ENCODE measurements at regions of chr15 and their contacts with region 1.

Region 1: DNA sequence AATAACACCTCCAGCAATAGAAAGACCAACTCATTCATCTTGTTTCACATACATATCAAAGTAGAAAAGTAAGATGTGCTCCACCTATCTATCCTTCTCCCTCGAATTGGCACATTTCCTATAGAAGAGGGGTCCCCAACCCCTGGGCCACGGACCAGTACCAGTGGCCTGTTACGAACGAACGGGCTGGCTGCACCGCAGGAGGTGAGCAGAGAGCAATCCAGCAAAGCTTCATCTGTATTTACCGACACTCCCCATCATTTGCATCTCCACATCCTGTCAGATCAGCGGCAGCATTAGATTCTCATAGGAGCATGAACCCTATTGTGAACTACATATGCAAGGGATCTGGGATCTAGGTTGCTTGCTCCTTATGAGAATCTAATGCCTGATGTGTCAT is 95.0 kb upstream of the CGNL1 start:
- DNase-seq: no peak
- ATAC-seq: no peak
- H3K4me3 ChIP-seq: no peak overlapping the region
- H3K27ac ChIP-seq: no peak overlapping the region
- H3K4me1 ChIP-seq: peaks cover 0 to 23% (median 0%) of the 10 kb centered on the region in 12 donors
- H3K27me3 ChIP-seq: no peaks in the 10 kb centered on the region
- CTCF ChIP-seq: no peak
- POLR2A ChIP-seq: no peak

Region 2: DNA sequence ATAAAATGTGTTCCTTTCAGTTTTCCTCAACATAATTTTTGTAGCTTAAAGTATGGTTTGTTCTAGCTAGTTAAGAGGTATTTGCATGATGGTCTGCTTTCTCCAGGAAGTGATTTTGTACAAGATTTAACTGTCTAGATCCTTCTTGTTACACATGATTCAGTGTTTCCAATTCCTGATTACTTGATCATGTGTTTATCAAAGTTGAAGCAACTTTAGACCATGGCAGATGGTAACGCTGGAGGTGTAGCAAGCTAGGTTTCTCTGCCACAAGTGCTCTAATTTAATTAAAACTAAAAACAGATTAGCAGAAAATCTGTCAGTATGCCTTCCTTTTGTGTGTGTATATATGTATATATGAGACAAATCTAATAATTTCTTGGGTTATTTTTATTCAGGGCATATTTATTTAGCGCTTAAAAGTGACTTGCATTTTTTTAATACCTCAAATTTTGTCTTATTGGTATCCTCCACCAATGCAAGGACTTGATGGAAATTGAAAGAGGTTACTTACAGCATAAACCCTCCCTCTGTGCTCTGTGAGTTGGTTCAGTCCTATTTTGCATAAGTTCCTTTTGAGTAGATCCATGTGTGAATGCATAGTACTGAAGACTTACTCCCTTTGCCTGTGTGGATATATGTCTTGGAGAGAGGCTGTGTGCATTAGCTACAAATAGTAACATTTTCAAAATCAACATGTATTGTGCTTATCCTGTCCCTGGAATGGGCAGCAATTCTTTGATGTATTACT is 62.3 kb before region 1 on chr15:
- intact Hi-C with region 1: loop called in 1 of 10 experiments (anchors 10 kb)
- DNase-seq: no peak
- ATAC-seq: peak in 1 of 4 donors; percentile 35
- H3K4me3 ChIP-seq: peak overlapping the region in 8 of 12 donors; percentile 10 to 45 (median 33)
- H3K27ac ChIP-seq: peak overlapping the region in 5 of 12 donors; percentile 9 to 26 (median 12)
- H3K4me1 ChIP-seq: peaks cover 0 to 66% (median 31%) of the 10 kb centered on the region in 12 donors
- H3K27me3 ChIP-seq: no peaks in the 10 kb centered on the region
- CTCF ChIP-seq: no peak
- POLR2A ChIP-seq: no peak

Region 3: GRCh38 chr15:57505949-57506391 is 224.6 kb after region 1 on chr15:
- intact Hi-C with region 1: no loop called
- DNase-seq: peak; percentile 62 to 74 (median 66)
- ATAC-seq: peak; percentile 56 to 84 (median 78)
- H3K4me3 ChIP-seq: no peak overlapping the region
- H3K27ac ChIP-seq: peak overlapping the region; percentile 24 to 86 (median 68)
- H3K4me1 ChIP-seq: peaks cover 0 to 77% (median 42%) of the 10 kb centered on the region in 12 donors
- H3K27me3 ChIP-seq: no peaks in the 10 kb centered on the region
- CTCF ChIP-seq: no peak
- POLR2A ChIP-seq: no peak

Measured in heart left ventricle (tissue), 16 donors.